ENCODE measurements at regions of chr2 and their contacts with region 1.

Region 1: GRCh38 chr2:9142551-9143263 is 63.9 kb upstream of the ASAP2 start:
- DNase-seq: peak; percentile 88 to 94
- H3K4me3 ChIP-seq: peak overlapping the region in 1 of 2 donors; percentile 9
- H3K27ac ChIP-seq: peak overlapping the region; percentile 72 to 84
- H3K4me1 ChIP-seq: peaks cover 6 to 7% of the 10 kb centered on the region in 2 donors
- H3K27me3 ChIP-seq: no peaks in the 10 kb centered on the region
- CTCF ChIP-seq: peak; percentile 98 to 99 (median 98)
- POLR2A ChIP-seq: peak; percentile 14 to 26

Region 2: DNA sequence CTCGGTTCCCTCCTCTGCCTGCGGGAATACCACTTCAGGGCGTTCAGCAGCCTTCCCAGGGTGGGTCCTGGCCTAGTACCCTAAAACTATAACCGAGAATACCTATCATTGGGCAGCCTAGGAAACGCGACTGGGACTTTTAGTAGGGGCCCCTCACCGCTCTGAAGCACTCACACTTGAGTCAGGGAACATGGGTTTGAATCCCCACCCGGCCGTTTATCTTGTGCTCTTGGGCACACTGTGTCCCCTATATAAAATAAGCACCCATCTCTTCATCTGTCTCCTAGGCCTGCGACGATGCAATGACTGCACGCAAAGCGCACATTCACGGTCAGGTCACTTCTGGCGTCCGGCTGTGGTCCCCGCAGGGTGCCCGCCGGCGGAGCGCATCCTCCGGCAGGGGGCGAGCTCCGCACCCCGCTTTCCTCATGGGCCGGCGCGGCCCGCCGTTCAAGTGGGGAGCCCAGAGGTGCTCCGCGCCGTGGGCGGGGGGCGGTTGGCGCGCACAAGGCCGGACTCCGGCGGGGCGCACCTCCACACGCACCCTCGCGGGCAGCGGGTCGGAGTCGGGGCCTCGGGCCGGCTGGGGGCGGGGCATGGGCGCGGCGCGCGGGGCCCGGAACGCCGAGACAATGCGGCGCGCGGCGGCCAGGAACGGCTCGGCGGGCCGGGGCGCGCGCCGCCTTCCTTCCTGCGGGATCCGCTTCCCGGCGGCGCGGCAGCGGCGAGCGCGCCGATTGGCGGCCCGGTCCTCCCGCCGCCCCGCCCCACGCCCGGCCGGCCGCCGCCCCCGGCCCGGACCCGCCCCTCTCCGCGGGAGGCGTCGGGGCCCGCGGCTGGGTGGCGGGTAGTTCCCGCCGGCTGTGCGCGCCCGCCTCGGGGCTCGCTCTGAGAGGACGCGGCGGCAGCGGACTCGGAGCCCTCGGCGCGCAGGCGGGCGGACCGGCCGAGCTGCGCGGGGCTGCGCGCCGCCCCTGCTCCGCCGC is 63.5 kb after region 1 on chr2 and contains the start of gene ASAP2:
- intact Hi-C with region 1: loop called (anchors 10 kb)
- DNase-seq: peak; percentile 71 to 79
- H3K4me3 ChIP-seq: peak within 1 kb of the TSS; percentile 54 to 84
- H3K27ac ChIP-seq: peak within 1 kb of the TSS; percentile 85 to 94
- H3K4me1 ChIP-seq: peaks cover 3% of the 10 kb centered on the region in 2 donors
- H3K27me3 ChIP-seq: no peaks in the 10 kb centered on the region
- CTCF ChIP-seq: peak; percentile 85 to 94 (median 90)
- POLR2A ChIP-seq: peak; percentile 36 to 51
- total RNA-seq, gene ASAP2: 24.3 to 55.5 (median 31.3) TPM

Region 3: GRCh38 chr2:9333591-9334171 is 191.0 kb after region 1 on chr2:
- intact Hi-C with region 1: loop called (anchors 10 kb)
- DNase-seq: peak; percentile 60 to 66
- H3K4me3 ChIP-seq: no peak overlapping the region
- H3K27ac ChIP-seq: peak overlapping the region in 1 of 2 donors; percentile 33
- H3K4me1 ChIP-seq: no peaks in the 10 kb centered on the region
- H3K27me3 ChIP-seq: no peaks in the 10 kb centered on the region
- CTCF ChIP-seq: peak; percentile 58 to 74 (median 68)
- POLR2A ChIP-seq: no peak

Measured in uterus (tissue), 4 donors.